Astrocyte of the cerebellum (primary cell): ENCODE measurements at regions of chr9 and their contacts with region 1.

Region 1: GRCh38 chr9:13369431-13369830 is 89.9 kb upstream of the MPDZ start:
- DNase-seq: no peak
- H3K4me3 ChIP-seq: no peak overlapping the region
- CTCF ChIP-seq: no peak

Region 2: DNA sequence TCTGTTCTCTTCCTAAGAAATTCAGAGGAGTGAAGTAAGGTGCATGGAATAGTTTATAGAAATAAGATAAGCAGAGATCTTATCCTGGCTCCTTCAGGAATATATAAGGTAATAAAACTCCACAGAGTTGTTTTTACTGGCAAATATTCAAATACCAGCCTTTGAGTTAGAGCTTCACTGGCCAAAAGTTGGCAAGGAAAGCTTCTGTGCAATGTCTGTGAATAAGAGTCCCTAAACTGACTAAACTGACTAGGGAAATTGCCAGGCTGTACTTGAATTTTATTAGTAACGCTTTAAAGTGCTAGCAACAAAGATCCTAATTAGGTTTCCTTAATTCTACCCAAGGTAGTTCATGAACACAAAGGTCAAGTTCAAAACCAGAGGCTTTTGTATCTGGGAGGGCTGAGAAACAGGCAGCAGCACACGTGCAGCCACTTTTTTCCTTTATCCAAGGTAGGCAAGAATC is 41.2 kb after region 1 on chr9:
- in situ Hi-C with region 1: loop called (anchors 5 kb)
- DNase-seq: peak; percentile 22
- H3K4me3 ChIP-seq: no peak overlapping the region
- CTCF ChIP-seq: no peak